ENCODE measurements at regions of chr20 and their contacts with region 1.

Region 1: DNA sequence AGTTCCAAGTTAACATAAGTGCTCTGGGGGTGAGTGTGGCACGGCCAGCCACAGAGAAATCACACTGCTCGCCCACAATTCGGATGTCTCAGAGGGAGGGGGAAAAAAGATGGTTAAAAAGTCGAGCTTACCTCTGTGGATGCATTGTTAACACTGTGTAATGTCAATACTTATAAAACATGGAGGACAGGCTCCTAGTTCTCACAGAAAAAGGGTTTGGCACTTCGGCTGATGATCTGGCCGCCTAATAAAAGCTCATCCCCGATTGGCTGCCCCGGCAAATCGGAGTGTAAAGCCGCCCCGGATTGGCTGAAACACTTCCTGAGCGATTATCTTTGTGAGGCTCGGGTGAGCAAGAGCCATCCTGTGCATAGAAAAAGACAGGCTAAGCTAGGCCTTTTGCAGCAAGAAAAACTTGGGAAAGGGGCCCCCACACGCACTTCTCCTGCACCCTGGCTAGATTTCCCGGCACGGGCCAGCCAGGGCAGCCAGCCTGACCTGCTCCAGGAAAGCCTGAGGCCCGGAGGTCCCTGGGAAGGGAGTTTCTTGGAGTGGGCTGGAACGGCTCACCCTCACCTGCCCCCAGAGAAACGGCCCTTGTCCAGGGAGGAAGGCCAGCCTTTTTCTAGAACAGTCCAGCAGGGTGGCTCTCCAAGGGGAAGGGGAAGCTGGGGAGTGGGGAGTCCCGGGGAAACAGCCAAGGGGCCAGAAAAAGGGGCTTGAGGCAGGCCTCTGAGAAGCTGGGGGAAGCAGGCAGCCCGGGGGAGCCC is at the start of gene ZMYND8:
- DNase-seq: peak; percentile 99
- total RNA-seq, gene ZMYND8: 7.8 and 14.5 TPM in 2 replicates

Region 2: GRCh38 chr20:47205577-47206498 is 150.9 kb before region 1 on chr20:
- in situ Hi-C with region 1: loop called (anchors 25 kb)
- DNase-seq: no peak